ENCODE measurements at regions of chr6 and their contacts with region 1.

Region 1: GRCh38 chr6:106325336-106326178 is at the start of gene ATG5:
- DNase-seq: peak; percentile 100
- H3K4me3 Mint-ChIP-seq: peak within 1 kb of the TSS; percentile 100
- H3K27ac Mint-ChIP-seq: peak within 1 kb of the TSS; percentile 98
- H3K4me1 Mint-ChIP-seq: peaks cover 35% of the 10 kb centered on the region
- H3K27me3 Mint-ChIP-seq: peaks cover 22% of the 10 kb centered on the region
- total RNA-seq, gene ATG5: 36.0 and 36.7 TPM in 2 replicates

Region 2: GRCh38 chr6:106629103-106629858 is 303.7 kb after region 1 on chr6 and contains the starts of genes QRSL1 and RTN4IP1:
- intact Hi-C with region 1: loop called (anchors 1 kb)
- DNase-seq: peak; percentile 84
- H3K4me3 Mint-ChIP-seq: peak within 1 kb of the TSS; percentile 95
- H3K27ac Mint-ChIP-seq: peak within 1 kb of the TSS; percentile 98
- H3K4me1 Mint-ChIP-seq: peaks cover 33% of the 10 kb centered on the region
- H3K27me3 Mint-ChIP-seq: no peaks in the 10 kb centered on the region
- total RNA-seq, gene QRSL1: 18.6 and 21.9 TPM in 2 replicates
- total RNA-seq, gene RTN4IP1: 6.4 and 6.8 TPM in 2 replicates